MCF 10A (cell line): ENCODE measurements at regions of chr3 and their contacts with region 1.

Region 1: DNA sequence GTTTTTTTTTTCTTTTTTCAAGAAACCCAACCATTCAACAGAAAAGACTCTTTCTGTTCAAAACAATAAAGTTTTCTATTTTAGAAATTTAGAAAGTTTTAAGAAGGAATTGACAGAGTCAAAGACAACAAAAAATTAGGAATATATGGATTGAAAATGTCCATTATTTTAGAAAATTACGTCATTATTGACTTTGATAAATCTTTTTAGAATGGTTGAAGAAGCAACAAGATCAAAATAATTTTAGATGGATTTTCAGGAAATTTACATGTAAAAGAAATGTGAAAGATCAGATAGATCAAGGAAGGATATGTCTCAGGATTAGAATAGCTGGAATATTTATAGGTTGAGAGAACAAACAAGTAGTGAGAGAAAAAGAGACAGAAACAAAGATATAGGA is 8.4 kb upstream of the KCNH8 start:
- DNase-seq: no peak
- H3K4me3 Mint-ChIP-seq: no peak overlapping the region
- H3K27ac Mint-ChIP-seq: no peak overlapping the region
- H3K4me1 Mint-ChIP-seq: no peaks in the 10 kb centered on the region
- H3K27me3 Mint-ChIP-seq: peaks cover 30% of the 10 kb centered on the region
- CTCF ChIP-seq: no peak

Region 2: DNA sequence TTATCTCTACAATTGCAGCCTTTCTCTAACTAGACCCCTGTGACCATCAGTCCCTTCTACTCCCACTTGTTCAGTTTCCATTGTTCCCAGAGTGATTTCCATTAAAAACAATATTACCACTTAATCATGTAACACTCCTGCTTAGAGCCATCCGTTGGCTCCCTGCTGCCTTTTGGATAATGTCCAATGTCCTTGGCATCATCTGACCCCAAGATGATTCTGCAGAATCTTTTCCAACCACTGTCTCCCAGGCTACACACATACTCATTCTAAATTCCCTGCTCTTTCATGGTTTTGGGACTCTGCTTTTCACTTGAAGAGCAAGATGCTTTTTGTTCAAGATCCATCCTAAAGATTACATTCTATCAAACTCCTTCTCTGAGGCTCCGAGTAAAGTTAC is 15.5 kb after region 1 on chr3:
- CTCF ChIA-PET with region 1: no interaction called
- POLR2A ChIA-PET with region 1: no interaction called
- intact Hi-C with region 1: loop called (anchors 1 kb)
- DNase-seq: no peak
- H3K4me3 Mint-ChIP-seq: no peak overlapping the region
- H3K27ac Mint-ChIP-seq: no peak overlapping the region
- H3K4me1 Mint-ChIP-seq: no peaks in the 10 kb centered on the region
- H3K27me3 Mint-ChIP-seq: peaks cover 27% of the 10 kb centered on the region
- CTCF ChIP-seq: no peak